Activated naive CD4-positive, alpha-beta T cell treated with anti-CD3 and anti-CD28 coated beads for 36 hours (primary cell): ENCODE measurements at regions of chr11 and their contacts with region 1.

Region 1: GRCh38 chr11:57800444-57801182 is 39.0 kb downstream of the CTNND1 start:
- DNase-seq: peak; percentile 12
- H3K4me3 Mint-ChIP-seq: no peak overlapping the region
- H3K27ac Mint-ChIP-seq: peak overlapping the region; percentile 60
- H3K4me1 Mint-ChIP-seq: peaks cover 25% of the 10 kb centered on the region
- H3K27me3 Mint-ChIP-seq: no peaks in the 10 kb centered on the region

Region 2: DNA sequence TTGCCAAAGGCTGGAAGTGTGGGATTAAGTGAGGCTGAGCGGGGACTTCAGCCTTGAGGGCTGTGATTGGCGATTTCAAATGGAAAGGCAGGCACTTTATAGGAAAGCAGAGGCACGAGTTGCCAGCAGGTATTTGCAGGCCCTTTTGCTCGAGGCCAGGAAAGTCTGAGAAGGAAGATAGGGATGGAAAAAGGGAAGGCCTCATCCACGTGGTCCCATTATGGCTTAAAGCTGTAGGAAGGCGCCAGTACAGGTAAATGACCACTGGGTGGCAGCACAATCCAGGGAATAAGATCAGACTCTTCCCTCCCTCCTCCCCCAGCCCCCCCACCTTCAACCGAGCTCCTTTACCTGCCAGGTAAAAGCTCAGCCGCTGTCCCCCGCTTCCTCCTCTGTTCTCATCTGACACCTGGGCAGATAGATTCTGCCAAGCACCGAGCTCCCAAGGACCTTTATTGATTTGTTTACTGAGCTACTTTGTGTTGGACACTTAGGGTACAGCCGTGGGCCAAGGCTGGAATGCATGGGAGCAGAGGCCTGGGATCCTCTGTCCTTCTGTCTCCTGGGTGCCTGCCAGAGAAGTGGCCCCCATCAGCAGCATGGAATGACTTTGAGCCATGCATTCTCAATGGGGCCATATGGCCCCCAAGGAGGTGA is 454.9 kb before region 1 on chr11:
- CTCF ChIA-PET with region 1: interaction called, 3 read pairs
- intact Hi-C with region 1: loop called (anchors 1 kb)
- DNase-seq: peak; percentile 81
- H3K4me3 Mint-ChIP-seq: no peak overlapping the region
- H3K27ac Mint-ChIP-seq: no peak overlapping the region
- H3K4me1 Mint-ChIP-seq: peaks cover 3% of the 10 kb centered on the region
- H3K27me3 Mint-ChIP-seq: no peaks in the 10 kb centered on the region

Region 3: GRCh38 chr11:57667736-57668435 is 132.7 kb before region 1 on chr11 and contains the start of gene ZDHHC5:
- CTCF ChIA-PET with region 1: interaction called, 8 read pairs
- intact Hi-C with region 1: loop called (anchors 1 kb)
- DNase-seq: peak; percentile 99
- H3K4me3 Mint-ChIP-seq: peak within 1 kb of the TSS; percentile 91
- H3K27ac Mint-ChIP-seq: peak within 1 kb of the TSS; percentile 97
- H3K4me1 Mint-ChIP-seq: peaks cover 43% of the 10 kb centered on the region
- H3K27me3 Mint-ChIP-seq: no peaks in the 10 kb centered on the region
- total RNA-seq, gene ZDHHC5: 38.5 to 46.6 TPM

Region 4: DNA sequence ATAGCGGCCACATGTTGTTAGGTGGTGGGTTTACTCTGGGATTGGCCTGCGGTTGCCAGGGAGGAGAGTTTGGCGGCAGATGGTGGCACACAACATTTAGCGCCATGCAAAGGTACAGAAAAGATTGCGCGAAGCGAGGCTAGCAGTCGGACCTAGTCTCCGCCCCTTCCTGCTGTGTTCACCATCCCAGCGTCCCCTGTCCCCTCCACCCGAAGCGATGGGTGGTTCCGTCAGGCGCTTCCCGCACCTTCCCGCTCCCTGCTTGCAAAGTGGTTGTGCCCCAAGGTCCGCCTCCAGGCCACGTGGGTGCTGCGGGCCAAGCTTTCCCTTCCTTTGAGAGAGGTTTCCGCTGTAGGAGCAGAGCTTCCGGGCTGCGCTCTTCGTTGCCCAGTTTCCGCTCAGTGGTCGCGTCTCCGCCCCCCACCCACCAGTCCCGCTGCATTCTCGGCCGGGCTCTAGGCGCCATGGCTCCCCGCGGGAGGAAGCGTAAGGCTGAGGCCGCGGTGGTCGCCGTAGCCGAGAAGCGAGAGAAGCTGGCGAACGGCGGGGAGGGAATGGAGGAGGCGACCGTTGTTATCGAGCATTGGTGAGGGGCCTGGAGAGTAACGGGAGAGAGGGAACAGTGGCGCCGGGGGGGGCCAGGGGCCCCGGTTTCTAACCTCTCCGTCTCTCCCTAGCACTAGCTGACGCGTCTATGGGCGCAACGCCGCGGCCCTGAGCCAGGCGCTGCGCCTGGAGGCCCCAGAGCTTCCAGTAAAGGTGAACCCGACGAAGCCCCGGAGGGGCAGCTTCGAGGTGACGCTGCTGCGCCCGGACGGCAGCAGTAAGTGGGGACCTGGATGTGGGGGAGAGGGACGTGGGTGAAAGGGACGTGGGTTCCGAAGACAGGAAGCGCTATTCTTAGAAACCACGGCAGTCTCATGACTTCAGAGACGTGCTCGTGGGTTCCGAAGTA is 59.2 kb before region 1 on chr11 and contains the start of gene SELENOH:
- CTCF ChIA-PET with region 1: interaction called, 64 read pairs
- intact Hi-C with region 1: loop called (anchors 1 kb)
- DNase-seq: peak; percentile 98
- H3K4me3 Mint-ChIP-seq: peak within 1 kb of the TSS; percentile 97
- H3K27ac Mint-ChIP-seq: peak within 1 kb of the TSS; percentile 99
- H3K4me1 Mint-ChIP-seq: peaks cover 32% of the 10 kb centered on the region
- H3K27me3 Mint-ChIP-seq: no peaks in the 10 kb centered on the region
- total RNA-seq, gene SELENOH: 249 to 282 TPM

Region 5: DNA sequence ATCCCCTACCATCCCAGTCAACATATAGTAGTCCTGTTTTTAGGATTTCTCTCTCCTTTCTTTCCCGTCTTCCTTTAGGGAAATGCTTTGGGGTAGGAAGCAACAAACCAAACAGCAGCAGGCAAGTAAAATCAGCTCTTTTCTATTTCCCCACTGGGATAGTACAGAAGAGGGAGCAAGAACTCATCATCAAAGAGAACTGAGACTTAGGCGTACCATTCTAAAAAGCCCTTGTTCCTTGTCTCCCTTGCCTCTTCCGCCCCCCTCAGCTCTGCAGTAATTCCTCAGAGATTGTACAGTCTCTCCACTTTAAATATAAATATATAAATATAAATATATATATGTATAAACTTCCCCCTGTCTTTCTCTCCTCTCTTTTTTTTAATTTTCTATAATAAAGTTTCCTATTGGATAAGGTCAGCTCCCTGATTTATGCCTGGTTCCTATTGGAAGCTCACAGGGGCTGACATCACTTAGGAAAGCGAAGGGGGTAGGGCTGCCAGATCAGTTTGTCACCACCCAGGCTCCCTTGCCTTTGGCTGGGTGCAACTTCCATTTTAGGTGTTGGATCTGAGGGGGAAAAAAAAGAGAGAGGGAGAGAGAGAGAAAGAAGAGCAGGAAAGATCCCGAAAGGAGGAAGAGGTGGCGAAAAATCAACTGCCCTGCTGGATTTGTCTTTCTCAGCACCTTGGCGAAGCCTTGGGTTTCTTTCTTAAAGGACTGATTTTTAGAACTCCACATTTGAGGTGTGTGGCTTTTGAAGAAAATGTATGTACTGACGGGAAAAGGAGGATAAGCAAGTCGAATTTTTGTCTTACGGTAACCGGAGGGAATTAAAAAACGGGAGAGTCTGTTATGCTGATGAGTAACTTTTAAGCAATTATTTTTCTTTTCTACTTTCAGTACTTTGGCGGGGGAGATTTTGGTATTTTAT is 39.0 kb before region 1 on chr11 and contains the start of gene CTNND1:
- CTCF ChIA-PET with region 1: interaction called, 21 read pairs
- intact Hi-C with region 1: loop called (anchors 1 kb)
- DNase-seq: peak; percentile 33
- H3K4me3 Mint-ChIP-seq: peak within 1 kb of the TSS; percentile 74
- H3K27ac Mint-ChIP-seq: peak within 1 kb of the TSS; percentile 6
- H3K4me1 Mint-ChIP-seq: peaks cover 29% of the 10 kb centered on the region
- H3K27me3 Mint-ChIP-seq: no peaks in the 10 kb centered on the region
- total RNA-seq, gene CTNND1: 5.5 to 8.5 TPM

Region 6: DNA sequence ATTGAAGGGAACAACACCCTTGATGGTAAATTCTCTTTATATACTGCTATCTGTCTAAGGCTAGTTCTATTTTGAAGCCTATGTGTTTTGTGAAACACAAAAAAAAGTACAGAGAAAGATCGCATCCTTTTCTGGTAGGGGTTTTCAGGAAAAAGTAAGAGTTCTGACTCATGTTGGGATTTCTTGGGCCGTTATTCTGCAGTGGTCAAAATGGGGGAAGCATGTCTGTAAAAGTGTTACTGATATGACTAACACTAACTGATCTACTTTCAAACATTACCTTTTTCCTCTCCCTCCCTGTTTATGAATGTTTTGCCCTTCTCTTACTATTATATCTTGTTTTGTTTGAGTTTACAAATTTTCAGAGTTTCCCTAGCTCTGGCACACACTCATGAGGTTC is 14.9 kb after region 1 on chr11:
- CTCF ChIA-PET with region 1: interaction called, 10 read pairs
- intact Hi-C with region 1: no loop called
- DNase-seq: no peak
- H3K4me3 Mint-ChIP-seq: no peak overlapping the region
- H3K27ac Mint-ChIP-seq: no peak overlapping the region
- H3K4me1 Mint-ChIP-seq: peaks cover 7% of the 10 kb centered on the region
- H3K27me3 Mint-ChIP-seq: no peaks in the 10 kb centered on the region